Activated B cell treated with CpG ODN at 0.5 μM for 24 hours (primary cell): ENCODE measurements at regions of chr6 and their contacts with region 1.

Region 1: DNA sequence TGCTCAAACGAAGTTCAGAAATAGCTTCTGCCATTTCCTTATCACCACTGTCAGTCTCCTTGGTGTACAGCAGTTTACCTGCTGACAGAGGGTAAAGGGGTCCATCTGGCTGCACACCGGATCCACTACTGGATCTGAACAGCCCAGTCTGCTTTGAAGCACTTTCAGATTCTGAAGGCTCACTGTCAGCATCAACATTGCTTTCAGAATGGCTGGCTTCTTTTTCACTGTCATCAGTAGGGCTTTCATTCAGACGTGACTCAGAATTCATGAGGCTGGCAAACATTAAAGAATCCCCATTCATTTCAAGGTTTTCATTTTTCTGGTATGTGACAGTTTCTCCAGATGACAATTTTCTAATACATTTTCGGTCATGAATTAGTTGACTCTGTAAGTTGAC is 21.0 kb upstream of the PNISR start:
- DNase-seq: no peak
- ATAC-seq: no peak
- H3K4me3 Mint-ChIP-seq: no peak overlapping the region
- H3K27ac Mint-ChIP-seq: no peak overlapping the region
- H3K4me1 Mint-ChIP-seq: peaks cover 18% of the 10 kb centered on the region
- H3K27me3 Mint-ChIP-seq: no peaks in the 10 kb centered on the region
- CTCF ChIP-seq: no peak

Region 2: GRCh38 chr6:99434702-99435530 is 11.2 kb before region 1 on chr6:
- CTCF ChIA-PET with region 1: no interaction called
- POLR2A ChIA-PET with region 1: no interaction called
- intact Hi-C with region 1: loop called (anchors 2 kb)
- DNase-seq: no peak
- ATAC-seq: peak; percentile 79
- H3K4me3 Mint-ChIP-seq: no peak overlapping the region
- H3K27ac Mint-ChIP-seq: no peak overlapping the region
- H3K4me1 Mint-ChIP-seq: peaks cover 3% of the 10 kb centered on the region
- H3K27me3 Mint-ChIP-seq: no peaks in the 10 kb centered on the region
- CTCF ChIP-seq: no peak